ENCODE measurements at regions of chr3 and their contacts with region 1.

Region 1: GRCh38 chr3:174869448-174869847 is 10.3 kb downstream of the NAALADL2 start:
- DNase-seq: peak; percentile 81
- H3K4me3 ChIP-seq: no peak overlapping the region
- H3K27ac ChIP-seq: no peak overlapping the region
- H3K27me3 ChIP-seq: no peaks in the 10 kb centered on the region
- CTCF ChIP-seq: no peak

Region 2: GRCh38 chr3:174083706-174084105 is 785.7 kb before region 1 on chr3:
- CTCF ChIA-PET with region 1: no interaction called
- POLR2A ChIA-PET with region 1: interaction called, 12 read pairs
- DNase-seq: no peak
- H3K4me3 ChIP-seq: no peak overlapping the region
- H3K27ac ChIP-seq: no peak overlapping the region
- H3K27me3 ChIP-seq: no peaks in the 10 kb centered on the region
- CTCF ChIP-seq: no peak